ENCODE measurements at regions of chr12 and their contacts with region 1.

Region 1: DNA sequence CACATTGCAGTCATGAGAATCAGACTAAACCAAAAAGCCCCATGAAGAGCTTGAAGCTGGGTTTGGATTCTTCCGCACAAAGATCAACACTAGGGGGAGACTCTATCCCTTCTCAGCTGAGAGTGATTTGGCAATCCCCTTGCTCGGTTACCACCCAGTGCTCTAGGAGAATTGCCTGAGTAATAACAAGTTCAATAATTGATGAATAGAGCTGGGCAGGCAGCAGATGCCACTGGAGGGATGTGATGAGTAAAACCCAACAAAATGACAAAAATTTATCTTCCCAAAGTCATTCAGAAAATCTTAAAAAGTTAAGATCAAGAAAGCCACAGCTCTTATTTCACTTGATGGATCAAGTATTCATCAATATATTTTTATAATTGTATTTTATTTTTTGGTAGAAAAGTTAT is 185.6 kb upstream of the ARID2 start:
- DNase-seq: peak; percentile 45 to 71 (median 58)
- ATAC-seq: peak; percentile 94
- H3K4me3 ChIP-seq: no peak overlapping the region
- H3K27ac ChIP-seq: no peak overlapping the region
- H3K4me1 ChIP-seq: no peaks in the 10 kb centered on the region
- H3K27me3 ChIP-seq: no peaks in the 10 kb centered on the region
- CTCF ChIP-seq: peak; percentile 71 to 78 (median 72)
- EP300 ChIP-seq: no peak
- POLR2A ChIP-seq: no peak
- RAD21 ChIP-seq: peak; percentile 64 to 81

Region 2: DNA sequence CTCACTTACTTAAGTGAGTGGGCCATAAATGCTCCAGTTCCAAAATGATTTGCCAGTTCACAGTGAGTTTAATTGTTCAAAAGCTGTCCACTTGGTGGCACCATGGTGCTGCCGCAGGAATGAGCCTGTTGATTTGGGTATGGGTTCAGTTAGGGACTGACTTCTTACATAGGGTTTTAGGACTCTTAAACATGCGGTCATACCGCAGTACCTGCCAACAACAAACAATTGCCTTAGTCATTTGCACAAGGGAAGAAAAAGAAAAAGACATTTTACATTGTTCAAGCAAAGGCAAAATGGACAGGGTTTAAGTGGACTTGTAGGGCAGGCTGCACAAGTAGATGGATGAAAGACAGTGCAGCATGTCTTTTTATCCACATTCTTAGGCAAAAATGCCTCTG is 413.0 kb before region 1 on chr12:
- CTCF ChIA-PET with region 1: no interaction called
- POLR2A ChIA-PET with region 1: interaction called, 3 read pairs
- in situ Hi-C with region 1: no loop called
- intact Hi-C with region 1: loop called (anchors 5 kb)
- DNase-seq: peak; percentile 45 to 68 (median 46)
- ATAC-seq: peak; percentile 93
- H3K4me3 ChIP-seq: no peak overlapping the region
- H3K27ac ChIP-seq: no peak overlapping the region
- H3K4me1 ChIP-seq: no peaks in the 10 kb centered on the region
- H3K27me3 ChIP-seq: no peaks in the 10 kb centered on the region; a peak in 1 of 5 replicates
- CTCF ChIP-seq: peak; percentile 63 to 80 (median 78)
- EP300 ChIP-seq: no peak
- POLR2A ChIP-seq: no peak
- RAD21 ChIP-seq: peak; percentile 77 to 86

Region 3: DNA sequence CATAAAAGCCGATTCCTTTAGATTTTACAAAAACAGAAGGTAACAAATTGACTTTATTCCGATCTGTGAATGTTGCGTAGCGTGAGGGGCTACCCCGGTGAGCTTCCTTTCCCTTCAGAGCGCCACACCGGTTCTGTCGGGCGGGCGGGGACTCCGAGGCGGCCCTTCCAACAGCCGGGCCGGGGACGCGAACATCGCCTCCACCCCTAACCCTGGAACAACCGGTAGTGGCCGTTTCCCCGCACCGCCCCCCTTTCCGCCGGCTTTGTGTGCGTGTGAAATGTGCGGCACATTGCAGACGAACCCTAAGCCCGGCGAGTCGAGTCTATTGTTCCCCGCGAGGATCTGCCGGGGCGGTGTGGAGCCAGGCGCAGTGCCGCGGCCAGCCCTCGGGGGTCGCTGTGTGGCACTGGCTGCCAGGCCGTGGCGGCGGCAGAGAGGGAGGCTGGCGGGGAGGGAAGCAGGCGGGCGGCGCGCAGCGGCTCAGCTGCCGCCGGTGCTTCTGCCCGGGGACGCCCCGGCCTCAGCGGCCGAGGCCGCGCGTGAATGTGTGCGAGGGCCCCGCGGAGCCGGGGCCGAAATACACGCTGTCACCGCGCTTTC is 184.8 kb after region 1 on chr12:
- CTCF ChIA-PET with region 1: no interaction called
- POLR2A ChIA-PET with region 1: no interaction called
- in situ Hi-C with region 1: no loop called
- intact Hi-C with region 1: loop called (anchors 2 kb)
- DNase-seq: peak; percentile 72 to 97 (median 80)
- ATAC-seq: peak; percentile 73
- H3K4me3 ChIP-seq: peak overlapping the region; percentile 71
- H3K27ac ChIP-seq: peak overlapping the region; percentile 95
- H3K4me1 ChIP-seq: peaks cover 4 to 6% of the 10 kb centered on the region in 2 experiments; a peak in 3 of 5 replicates
- H3K27me3 ChIP-seq: no peaks in the 10 kb centered on the region
- CTCF ChIP-seq: peak; percentile 89 to 98 (median 97)
- EP300 ChIP-seq: peak; percentile 72
- POLR2A ChIP-seq: peak; percentile 95
- RAD21 ChIP-seq: peak; percentile 43 to 61

Region 4: GRCh38 chr12:45907955-45908354 is 364.0 kb after region 1 on chr12:
- CTCF ChIA-PET with region 1: no interaction called
- POLR2A ChIA-PET with region 1: no interaction called
- in situ Hi-C with region 1: no loop called
- intact Hi-C with region 1: loop called (anchors 10 kb)
- DNase-seq: no peak
- ATAC-seq: no peak
- H3K4me3 ChIP-seq: no peak overlapping the region
- H3K27ac ChIP-seq: no peak overlapping the region
- H3K4me1 ChIP-seq: no peaks in the 10 kb centered on the region
- H3K27me3 ChIP-seq: no peaks in the 10 kb centered on the region
- CTCF ChIP-seq: no peak
- EP300 ChIP-seq: no peak
- POLR2A ChIP-seq: no peak
- RAD21 ChIP-seq: no peak

Measured in K562 (cell line).